MCF 10A (cell line): ENCODE measurements at regions of chr6 and their contacts with region 1.

Region 1: GRCh38 chr6:108558372-108559096 is 2.2 kb upstream of the FOXO3 start:
- DNase-seq: peak; percentile 97
- H3K4me3 Mint-ChIP-seq: peak overlapping the region; percentile 90
- H3K27ac Mint-ChIP-seq: peak overlapping the region; percentile 91
- H3K4me1 Mint-ChIP-seq: peaks cover 28% of the 10 kb centered on the region
- H3K27me3 Mint-ChIP-seq: no peaks in the 10 kb centered on the region
- CTCF ChIP-seq: no peak

Region 2: GRCh38 chr6:108581237-108581931 is 22.9 kb after region 1 on chr6:
- CTCF ChIA-PET with region 1: interaction called, 4 read pairs
- POLR2A ChIA-PET with region 1: interaction called, 47 read pairs
- intact Hi-C with region 1: no loop called
- DNase-seq: peak; percentile 96
- H3K4me3 Mint-ChIP-seq: peak overlapping the region; percentile 67
- H3K27ac Mint-ChIP-seq: peak overlapping the region; percentile 50
- H3K4me1 Mint-ChIP-seq: peaks cover 76% of the 10 kb centered on the region
- H3K27me3 Mint-ChIP-seq: no peaks in the 10 kb centered on the region
- CTCF ChIP-seq: no peak

Region 3: DNA sequence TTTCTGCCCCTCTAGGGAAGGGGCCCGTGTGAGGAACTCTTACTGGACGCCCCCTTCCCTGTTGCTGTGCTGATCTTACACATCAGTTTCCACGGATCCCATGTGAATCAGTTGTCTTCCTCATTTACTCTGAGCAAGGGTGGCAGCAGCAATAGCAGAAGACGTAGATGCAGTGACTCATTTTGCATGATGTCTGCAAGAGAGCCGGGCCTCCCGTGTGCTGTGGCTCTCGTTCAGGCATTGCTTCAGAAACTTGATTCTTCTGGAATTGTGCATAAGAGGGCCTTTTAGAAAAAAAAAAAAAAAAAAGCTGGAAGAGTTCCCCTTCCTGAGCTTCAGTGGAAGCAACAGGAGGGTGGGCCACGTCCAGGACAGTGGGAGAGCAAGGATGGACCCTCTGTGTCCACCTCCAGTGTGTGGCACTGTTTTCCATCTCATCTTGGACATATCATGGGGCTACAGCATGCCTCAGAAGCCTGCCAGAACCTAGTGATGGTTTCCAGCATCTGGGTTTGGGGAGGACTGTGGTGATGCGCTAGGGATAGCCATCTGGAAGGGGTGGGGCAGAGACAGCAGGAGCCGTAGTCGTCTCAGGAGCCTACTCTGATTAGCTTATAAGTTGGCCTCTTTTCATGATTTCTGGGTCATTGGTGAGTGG is 64.2 kb after region 1 on chr6:
- CTCF ChIA-PET with region 1: interaction called, 4 read pairs
- POLR2A ChIA-PET with region 1: interaction called, 23 read pairs
- intact Hi-C with region 1: no loop called
- DNase-seq: peak; percentile 77
- H3K4me3 Mint-ChIP-seq: peak overlapping the region; percentile 38
- H3K27ac Mint-ChIP-seq: peak overlapping the region; percentile 77
- H3K4me1 Mint-ChIP-seq: peaks cover 76% of the 10 kb centered on the region
- H3K27me3 Mint-ChIP-seq: no peaks in the 10 kb centered on the region
- CTCF ChIP-seq: no peak

Region 4: GRCh38 chr6:108737594-108738546 is 179.3 kb after region 1 on chr6:
- CTCF ChIA-PET with region 1: interaction called, 3 read pairs
- POLR2A ChIA-PET with region 1: interaction called, 4 read pairs
- intact Hi-C with region 1: loop called (anchors 5 kb)
- DNase-seq: peak; percentile 78
- H3K4me3 Mint-ChIP-seq: no peak overlapping the region
- H3K27ac Mint-ChIP-seq: peak overlapping the region; percentile 18
- H3K4me1 Mint-ChIP-seq: peaks cover 51% of the 10 kb centered on the region
- H3K27me3 Mint-ChIP-seq: no peaks in the 10 kb centered on the region
- CTCF ChIP-seq: no peak

Region 5: DNA sequence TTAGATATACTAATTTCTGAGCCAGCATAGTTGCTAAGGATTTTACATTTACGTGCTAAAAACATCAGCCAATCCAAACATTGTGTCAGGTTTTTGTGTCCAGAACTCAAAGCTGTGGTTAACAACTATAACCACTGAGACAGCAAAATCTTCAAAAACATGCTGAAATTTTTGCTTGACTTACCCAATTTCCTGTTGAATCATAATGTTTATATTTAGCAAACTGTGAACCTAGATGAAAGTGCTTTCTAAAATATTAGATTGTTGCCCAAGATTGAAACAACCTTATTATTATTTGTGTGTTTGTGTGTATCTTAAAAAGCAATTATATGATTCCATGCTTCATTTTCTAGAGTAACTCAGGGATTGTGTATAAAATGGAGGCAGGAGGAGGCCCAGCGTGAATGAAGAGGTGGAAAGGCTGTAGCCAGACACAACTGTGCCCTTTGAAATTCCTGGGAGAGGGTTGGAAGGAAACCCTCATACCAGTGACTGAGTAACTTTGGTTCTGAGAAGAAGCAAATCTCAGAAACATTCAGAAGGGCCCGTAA is 337.7 kb after region 1 on chr6:
- CTCF ChIA-PET with region 1: interaction called, 6 read pairs
- POLR2A ChIA-PET with region 1: interaction called, 13 read pairs
- intact Hi-C with region 1: loop called (anchors 1 kb)
- DNase-seq: peak; percentile 88
- H3K4me3 Mint-ChIP-seq: peak overlapping the region; percentile 40
- H3K27ac Mint-ChIP-seq: peak overlapping the region; percentile 97
- H3K4me1 Mint-ChIP-seq: peaks cover 29% of the 10 kb centered on the region
- H3K27me3 Mint-ChIP-seq: no peaks in the 10 kb centered on the region
- CTCF ChIP-seq: no peak

Region 6: GRCh38 chr6:109059571-109060021 is 501.1 kb after region 1 on chr6:
- CTCF ChIA-PET with region 1: no interaction called
- POLR2A ChIA-PET with region 1: interaction called, 18 read pairs
- intact Hi-C with region 1: no loop called
- DNase-seq: peak; percentile 71
- H3K4me3 Mint-ChIP-seq: peak overlapping the region; percentile 61
- H3K27ac Mint-ChIP-seq: peak overlapping the region; percentile 96
- H3K4me1 Mint-ChIP-seq: peaks cover 52% of the 10 kb centered on the region
- H3K27me3 Mint-ChIP-seq: no peaks in the 10 kb centered on the region
- CTCF ChIP-seq: peak; percentile 56